K562 (cell line): ENCODE measurements at regions of chr9 and their contacts with region 1.

Region 1: GRCh38 chr9:92781923-92782322 is 17.3 kb upstream of the BICD2 start:
- DNase-seq: no peak
- ATAC-seq: no peak
- H3K4me3 ChIP-seq: no peak overlapping the region
- H3K27ac ChIP-seq: no peak overlapping the region
- H3K4me1 ChIP-seq: no peaks in the 10 kb centered on the region
- H3K27me3 ChIP-seq: peaks cover 0 to 1% of the 10 kb centered on the region in 2 experiments; a peak in 1 of 5 replicates
- CTCF ChIP-seq: no peak
- EP300 ChIP-seq: no peak
- POLR2A ChIP-seq: no peak
- RAD21 ChIP-seq: no peak

Region 2: GRCh38 chr9:92716557-92716956 is 65.4 kb before region 1 on chr9:
- CTCF ChIA-PET with region 1: no interaction called
- POLR2A ChIA-PET with region 1: no interaction called
- in situ Hi-C with region 1: loop called (anchors 10 kb)
- intact Hi-C with region 1: no loop called
- DNase-seq: peak; percentile 70 to 82 (median 78)
- ATAC-seq: peak; percentile 95
- H3K4me3 ChIP-seq: no peak overlapping the region
- H3K27ac ChIP-seq: no peak overlapping the region
- H3K4me1 ChIP-seq: peaks cover 8 to 19% of the 10 kb centered on the region in 2 experiments
- H3K27me3 ChIP-seq: no peaks in the 10 kb centered on the region
- CTCF ChIP-seq: peak; percentile 77 to 89 (median 81)
- EP300 ChIP-seq: no peak
- POLR2A ChIP-seq: no peak
- RAD21 ChIP-seq: peak; percentile 57 to 86